CD4-positive, alpha-beta memory T cell (primary cell): ENCODE measurements at regions of chr2 and their contacts with region 1.

Region 1: GRCh38 chr2:84970868-84971509 is at the start of gene KCMF1:
- DNase-seq: peak; percentile 64 to 79 (median 71)
- H3K4me3 ChIP-seq: peak within 1 kb of the TSS; percentile 63 to 90
- H3K4me3 Mint-ChIP-seq: peak within 1 kb of the TSS; percentile 93 to 100 (median 99)
- H3K27ac ChIP-seq: peak within 1 kb of the TSS; percentile 93
- H3K27ac Mint-ChIP-seq: peak within 1 kb of the TSS; percentile 97 to 100 (median 99)
- H3K4me1 ChIP-seq: peaks cover 59% of the 10 kb centered on the region
- H3K4me1 Mint-ChIP-seq: peaks cover 41 to 73% (median 56%) of the 10 kb centered on the region in 4 donors
- H3K27me3 ChIP-seq: no peaks in the 10 kb centered on the region
- H3K27me3 Mint-ChIP-seq: peaks cover 0 to 2% of the 10 kb centered on the region in 2 donors
- total RNA-seq, gene KCMF1: 59.8 to 62.7 TPM

Region 2: GRCh38 chr2:84946204-84947009 is 24.6 kb before region 1 on chr2:
- CTCF ChIA-PET with region 1: interaction called, 19 read pairs
- POLR2A ChIA-PET with region 1: interaction called, 195 read pairs
- intact Hi-C with region 1: loop called (anchors 2 kb)
- DNase-seq: peak; percentile 47 to 84 (median 52)
- H3K4me3 ChIP-seq: peak overlapping the region in 1 of 2 donors; percentile 11
- H3K4me3 Mint-ChIP-seq: peak overlapping the region; percentile 27 to 84 (median 66)
- H3K27ac ChIP-seq: peak overlapping the region; percentile 33
- H3K27ac Mint-ChIP-seq: peak overlapping the region; percentile 76 to 97 (median 91)
- H3K4me1 ChIP-seq: peaks cover 23% of the 10 kb centered on the region
- H3K4me1 Mint-ChIP-seq: peaks cover 18 to 33% (median 25%) of the 10 kb centered on the region in 4 donors
- H3K27me3 ChIP-seq: no peaks in the 10 kb centered on the region
- H3K27me3 Mint-ChIP-seq: no peaks in the 10 kb centered on the region

Region 3: DNA sequence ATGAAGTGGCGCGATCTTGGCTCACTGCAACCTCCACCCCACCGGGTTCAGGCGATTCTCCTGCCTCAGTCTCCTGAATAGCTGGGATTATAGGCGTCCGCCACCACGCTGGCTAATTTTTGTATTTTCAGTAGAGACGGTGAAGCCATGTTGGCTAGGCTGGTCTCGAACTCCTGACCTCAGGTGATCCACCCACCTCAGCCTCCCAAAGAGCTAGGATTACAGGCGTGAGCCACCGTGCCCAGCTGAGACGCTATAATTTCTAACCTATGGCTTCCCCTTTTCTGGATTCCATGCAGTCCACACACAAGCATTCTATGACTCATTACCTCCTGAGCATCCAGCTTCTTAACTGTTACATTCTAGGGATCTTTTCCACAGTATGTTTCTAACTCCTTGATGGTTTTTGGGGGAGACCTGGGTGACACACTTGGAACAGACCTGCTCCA is 11.9 kb before region 1 on chr2:
- CTCF ChIA-PET with region 1: interaction called, 5 read pairs
- POLR2A ChIA-PET with region 1: interaction called, 11 read pairs
- intact Hi-C with region 1: no loop called
- DNase-seq: no peak
- H3K4me3 ChIP-seq: no peak overlapping the region
- H3K4me3 Mint-ChIP-seq: no peak overlapping the region
- H3K27ac ChIP-seq: no peak overlapping the region
- H3K27ac Mint-ChIP-seq: peak overlapping the region in 5 of 7 donors; percentile 10 to 81 (median 55)
- H3K4me1 ChIP-seq: peaks cover 6% of the 10 kb centered on the region
- H3K4me1 Mint-ChIP-seq: peaks cover 15 to 32% (median 24%) of the 10 kb centered on the region in 4 donors
- H3K27me3 ChIP-seq: no peaks in the 10 kb centered on the region
- H3K27me3 Mint-ChIP-seq: no peaks in the 10 kb centered on the region